ENCODE measurements at regions of chr6 and their contacts with region 1.

Region 1: GRCh38 chr6:15245361-15246216 is at the start of gene JARID2:
- DNase-seq: peak; percentile 99
- ATAC-seq: peak; percentile 83 to 93 (median 88)
- H3K4me3 ChIP-seq: peak within 1 kb of the TSS; percentile 56 to 90 (median 82)
- H3K27ac ChIP-seq: peak within 1 kb of the TSS; percentile 90 to 98 (median 94)
- H3K4me1 ChIP-seq: peaks cover 0 to 39% (median 30%) of the 10 kb centered on the region in 9 donors
- H3K27me3 ChIP-seq: no peaks in the 10 kb centered on the region
- CTCF ChIP-seq: peak in 1 of 9 donors; percentile 5
- total RNA-seq, gene JARID2: 5.8 to 11.6 (median 9.4) TPM

Region 2: GRCh38 chr6:14423330-14423729 is 822.3 kb before region 1 on chr6:
- intact Hi-C with region 1: loop called in 1 of 10 experiments (anchors 10 kb)
- DNase-seq: peak in 1 of 2 donors; percentile 75
- ATAC-seq: peak; percentile 91 to 98 (median 94)
- H3K4me3 ChIP-seq: no peak overlapping the region
- H3K27ac ChIP-seq: peak overlapping the region in 6 of 10 donors; percentile 22 to 75 (median 60)
- H3K4me1 ChIP-seq: peaks cover 0 to 26% (median 8%) of the 10 kb centered on the region in 9 donors
- H3K27me3 ChIP-seq: no peaks in the 10 kb centered on the region
- CTCF ChIP-seq: no peak

Region 3: DNA sequence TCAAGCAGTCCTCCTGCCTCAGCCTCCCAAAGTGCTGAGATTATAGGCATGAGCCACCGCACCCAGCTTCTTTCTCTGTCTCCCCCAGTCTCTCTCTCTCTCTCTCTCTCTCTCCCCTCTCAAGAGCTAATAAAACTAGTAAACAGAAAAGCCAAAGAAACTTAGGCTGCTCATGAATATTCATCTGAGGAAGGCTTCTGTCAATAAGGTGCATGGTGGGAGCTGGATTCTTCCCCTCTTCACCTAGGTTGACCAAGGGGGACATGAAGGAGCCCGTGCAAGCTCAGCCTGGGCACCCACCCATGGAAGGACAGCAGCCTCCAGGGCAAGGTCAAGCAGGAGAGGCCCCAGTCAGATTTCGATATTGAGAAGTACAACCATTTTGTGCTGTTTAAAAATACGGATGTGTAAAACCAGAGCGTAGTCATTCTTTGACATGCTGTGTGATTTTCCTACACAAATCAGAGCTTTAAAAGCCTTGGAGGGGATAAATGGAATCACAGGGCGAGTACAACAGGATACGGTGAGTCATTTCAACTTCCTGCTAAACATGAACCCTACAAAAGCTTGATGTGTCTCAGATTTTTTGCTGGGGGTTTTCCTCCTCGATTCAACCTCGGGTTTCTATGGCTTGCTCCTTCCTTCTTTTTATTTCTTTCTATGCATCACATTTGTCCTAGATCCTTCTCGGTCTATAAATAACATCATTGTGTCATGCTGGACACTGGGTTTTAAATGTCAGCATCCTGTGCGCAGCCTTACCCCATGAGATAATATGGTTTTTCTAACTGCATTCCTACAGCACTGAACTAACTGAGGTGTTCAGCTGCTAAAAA is 368.6 kb before region 1 on chr6:
- intact Hi-C with region 1: loop called in 7 of 10 experiments (anchors 5 to 10 kb)
- DNase-seq: peak in 1 of 2 donors; percentile 29
- ATAC-seq: peak; percentile 75 to 92 (median 88)
- H3K4me3 ChIP-seq: no peak overlapping the region
- H3K27ac ChIP-seq: peak overlapping the region; percentile 48 to 89 (median 76)
- H3K4me1 ChIP-seq: peaks cover 11 to 64% (median 45%) of the 10 kb centered on the region in 9 donors
- H3K27me3 ChIP-seq: no peaks in the 10 kb centered on the region
- CTCF ChIP-seq: no peak

Region 4: GRCh38 chr6:15365273-15365687 is 119.7 kb after region 1 on chr6:
- intact Hi-C with region 1: loop called in 3 of 10 experiments (anchors 5 to 10 kb)
- DNase-seq: peak; percentile 76 to 89
- ATAC-seq: peak; percentile 78 to 94 (median 90)
- H3K4me3 ChIP-seq: peak overlapping the region in 5 of 10 donors; percentile 1 to 25 (median 4)
- H3K27ac ChIP-seq: no peak overlapping the region
- H3K4me1 ChIP-seq: peaks cover 0 to 78% (median 62%) of the 10 kb centered on the region in 9 donors
- H3K27me3 ChIP-seq: no peaks in the 10 kb centered on the region
- CTCF ChIP-seq: no peak

Region 5: DNA sequence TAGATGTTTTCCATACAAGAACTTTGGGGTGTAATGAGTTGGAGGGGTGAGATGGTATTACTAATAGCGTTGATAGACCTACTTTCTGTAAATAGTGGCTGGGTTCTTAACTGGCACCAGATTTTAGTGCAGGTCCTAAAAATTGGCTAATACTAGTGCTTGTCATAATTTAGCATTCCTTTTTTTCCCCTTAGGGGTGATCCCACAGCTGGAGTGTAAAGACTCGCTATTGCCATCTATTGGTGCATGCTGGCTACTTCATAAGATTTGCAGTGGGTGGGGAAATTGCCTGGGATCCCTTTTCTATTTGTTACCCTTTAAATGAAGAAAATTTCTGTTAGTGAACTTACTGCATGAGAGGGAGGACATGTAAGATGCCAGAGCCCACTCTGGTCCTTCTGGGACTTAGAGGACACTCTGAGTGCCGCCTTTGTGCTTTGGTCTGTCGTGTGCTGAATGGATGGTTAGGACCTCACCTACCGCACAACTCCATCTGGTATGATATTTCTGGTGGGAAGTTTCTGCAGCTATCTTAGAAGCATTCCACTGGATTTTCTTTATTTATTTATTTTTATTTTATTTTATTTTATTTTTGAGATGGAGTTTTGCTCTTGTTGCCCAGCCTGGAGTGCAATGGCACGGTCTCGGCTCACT is 195.8 kb after region 1 on chr6:
- intact Hi-C with region 1: loop called in 7 of 10 experiments (anchors 2 to 10 kb)
- DNase-seq: peak in 1 of 2 donors; percentile 56
- ATAC-seq: peak; percentile 51 to 75 (median 70)
- H3K4me3 ChIP-seq: no peak overlapping the region
- H3K27ac ChIP-seq: no peak overlapping the region
- H3K4me1 ChIP-seq: peaks cover 4 to 90% (median 70%) of the 10 kb centered on the region in 9 donors
- H3K27me3 ChIP-seq: no peaks in the 10 kb centered on the region
- CTCF ChIP-seq: peak; percentile 69 to 88 (median 80)

Region 6: GRCh38 chr6:15504581-15505350 is 259.2 kb after region 1 on chr6:
- intact Hi-C with region 1: loop called in 2 of 10 experiments (anchors 5 kb)
- DNase-seq: peak; percentile 73 to 75
- ATAC-seq: peak; percentile 59 to 86 (median 80)
- H3K4me3 ChIP-seq: peak overlapping the region in 8 of 10 donors; percentile 6 to 42 (median 28)
- H3K27ac ChIP-seq: peak overlapping the region; percentile 46 to 88 (median 78)
- H3K4me1 ChIP-seq: peaks cover 15 to 64% (median 51%) of the 10 kb centered on the region in 9 donors
- H3K27me3 ChIP-seq: no peaks in the 10 kb centered on the region
- CTCF ChIP-seq: peak in 1 of 9 donors; percentile 4

Measured in heart right ventricle (tissue), 16 donors.